A673 (cell line): ENCODE measurements at regions of chr6 and their contacts with region 1.

Region 1: DNA sequence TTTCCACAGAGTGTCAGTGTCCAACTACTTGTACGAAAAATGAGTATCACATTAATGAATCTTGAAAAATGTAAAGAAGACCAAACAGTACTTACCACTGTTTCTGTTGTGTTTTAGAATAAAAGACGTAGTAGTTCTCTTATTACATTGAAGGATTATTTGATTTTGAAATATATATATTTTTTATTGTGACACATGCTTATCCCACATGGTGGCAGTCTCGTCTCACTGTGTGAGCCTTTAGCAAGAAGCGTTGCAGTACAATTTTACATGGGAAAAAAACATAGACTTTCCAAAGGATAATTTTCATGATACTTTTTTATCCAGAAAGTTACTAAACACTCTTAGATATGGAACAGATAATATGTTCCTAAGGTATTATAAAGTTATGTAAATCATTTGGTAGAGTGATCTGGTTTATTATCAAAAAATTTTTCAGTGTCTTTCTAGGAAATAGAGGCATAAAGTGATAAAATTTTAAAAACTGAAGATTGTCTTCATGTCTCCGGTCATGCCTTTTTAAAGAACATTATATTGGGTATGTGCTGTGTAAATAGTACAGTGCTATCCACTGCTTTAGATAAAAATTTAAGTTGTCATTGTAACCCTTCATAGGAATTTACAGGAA is 117.5 kb upstream of the SAMD5 start:
- DNase-seq: peak; percentile 68
- H3K4me3 ChIP-seq: no peak overlapping the region
- H3K27ac ChIP-seq: no peak overlapping the region
- H3K4me1 ChIP-seq: no peaks in the 10 kb centered on the region
- H3K27me3 ChIP-seq: no peaks in the 10 kb centered on the region
- CTCF ChIP-seq: peak; percentile 77

Region 2: GRCh38 chr6:147447835-147448611 is 57.0 kb after region 1 on chr6:
- CTCF ChIA-PET with region 1: no interaction called
- POLR2A ChIA-PET with region 1: no interaction called
- intact Hi-C with region 1: no loop called
- DNase-seq: peak; percentile 62
- H3K4me3 ChIP-seq: no peak overlapping the region
- H3K27ac ChIP-seq: no peak overlapping the region
- H3K4me1 ChIP-seq: peaks cover 11% of the 10 kb centered on the region
- H3K27me3 ChIP-seq: no peaks in the 10 kb centered on the region
- CTCF ChIP-seq: no peak

Region 3: GRCh38 chr6:147530132-147531060 is 139.4 kb after region 1 on chr6:
- CTCF ChIA-PET with region 1: no interaction called
- POLR2A ChIA-PET with region 1: no interaction called
- intact Hi-C with region 1: no loop called
- DNase-seq: no peak
- H3K4me3 ChIP-seq: no peak overlapping the region
- H3K27ac ChIP-seq: no peak overlapping the region
- H3K4me1 ChIP-seq: peaks cover 21% of the 10 kb centered on the region
- H3K27me3 ChIP-seq: no peaks in the 10 kb centered on the region
- CTCF ChIP-seq: no peak

Region 4: DNA sequence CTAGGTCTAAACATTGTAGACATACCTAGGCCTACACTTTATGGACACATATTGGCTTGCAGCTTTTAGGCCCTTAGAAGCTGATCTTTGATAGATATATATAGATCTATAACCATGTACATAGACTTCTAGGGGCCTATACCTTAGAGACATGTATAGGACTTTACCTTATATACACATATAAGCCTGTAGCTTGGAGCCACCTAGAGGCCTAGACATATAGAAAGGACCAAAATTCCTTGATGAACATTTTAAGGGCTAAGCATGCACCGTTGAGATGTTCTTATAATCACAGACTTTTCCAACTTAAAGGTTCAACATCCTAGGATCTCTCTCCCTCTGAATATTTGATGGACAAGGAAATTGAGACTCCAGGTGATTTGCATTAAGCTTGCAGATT is 580.0 kb after region 1 on chr6:
- CTCF ChIA-PET with region 1: no interaction called
- POLR2A ChIA-PET with region 1: no interaction called
- intact Hi-C with region 1: loop called (anchors 10 kb)
- DNase-seq: peak; percentile 55
- H3K4me3 ChIP-seq: no peak overlapping the region
- H3K27ac ChIP-seq: no peak overlapping the region
- H3K4me1 ChIP-seq: no peaks in the 10 kb centered on the region
- H3K27me3 ChIP-seq: no peaks in the 10 kb centered on the region
- CTCF ChIP-seq: peak; percentile 60

Region 5: GRCh38 chr6:148166339-148166968 is 775.4 kb after region 1 on chr6:
- CTCF ChIA-PET with region 1: no interaction called
- POLR2A ChIA-PET with region 1: no interaction called
- intact Hi-C with region 1: loop called (anchors 1 kb)
- DNase-seq: peak; percentile 77
- H3K4me3 ChIP-seq: no peak overlapping the region
- H3K27ac ChIP-seq: no peak overlapping the region
- H3K4me1 ChIP-seq: no peaks in the 10 kb centered on the region
- H3K27me3 ChIP-seq: no peaks in the 10 kb centered on the region
- CTCF ChIP-seq: peak; percentile 77